ENCODE measurements at regions of chr13 and their contacts with region 1.

Region 1: DNA sequence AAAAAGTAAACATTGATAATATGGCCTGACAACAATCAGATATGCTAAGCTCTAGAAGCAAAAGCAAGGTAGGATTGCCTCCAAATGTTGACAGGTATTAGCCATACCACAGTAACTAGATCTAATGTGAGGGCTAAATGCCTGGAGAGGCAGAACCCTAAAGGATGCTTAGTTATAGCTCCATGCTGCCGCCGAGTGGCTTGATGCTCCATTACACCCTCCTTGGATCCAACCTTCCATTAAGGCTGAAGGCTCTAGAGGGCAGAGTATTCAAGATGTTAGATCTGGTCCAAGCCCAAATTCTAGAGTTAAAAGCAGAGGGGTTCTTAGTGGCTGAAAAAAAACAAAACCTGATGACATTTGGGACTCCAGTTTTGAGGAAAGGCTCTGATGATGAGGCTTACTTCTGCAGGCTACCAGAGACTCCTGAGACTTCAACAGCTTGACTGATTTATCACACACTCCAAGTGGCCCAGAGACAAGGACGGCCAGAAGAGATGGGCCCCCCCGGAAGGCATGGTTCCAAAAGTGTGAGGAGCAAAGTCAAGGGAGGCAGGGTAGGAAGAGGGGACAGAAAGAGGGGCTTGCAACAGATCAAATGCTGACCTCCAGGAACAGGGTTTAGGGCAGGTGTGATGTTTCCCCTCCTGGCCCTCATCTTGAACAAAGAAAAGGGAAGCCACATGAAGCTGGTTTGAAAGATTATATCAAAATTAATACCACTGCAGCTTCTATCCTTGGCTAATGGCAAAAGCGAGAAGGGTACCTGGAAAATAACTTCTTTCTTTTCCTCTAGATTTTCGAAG is 21.9 kb upstream of the CPB2 start:
- DNase-seq: peak; percentile 55 to 66
- ATAC-seq: peak; percentile 93 to 99
- H3K4me3 ChIP-seq: no peak overlapping the region
- H3K27ac ChIP-seq: no peak overlapping the region
- H3K4me1 ChIP-seq: no peaks in the 10 kb centered on the region
- CTCF ChIP-seq: peak; percentile 77
- EP300 ChIP-seq: no peak
- POLR2A ChIP-seq: no peak
- RAD21 ChIP-seq: peak; percentile 80 to 81

Region 2: GRCh38 chr13:45623515-45624090 is 503.2 kb before region 1 on chr13:
- CTCF ChIA-PET with region 1: interaction called, 22 read pairs
- POLR2A ChIA-PET with region 1: no interaction called
- DNase-seq: peak; percentile 25 to 27
- ATAC-seq: peak in 1 of 2 experiments; percentile 59; a peak in 3 of 6 replicates
- H3K4me3 ChIP-seq: no peak overlapping the region
- H3K27ac ChIP-seq: no peak overlapping the region
- H3K4me1 ChIP-seq: no peaks in the 10 kb centered on the region
- CTCF ChIP-seq: peak; percentile 59
- EP300 ChIP-seq: no peak
- POLR2A ChIP-seq: no peak
- RAD21 ChIP-seq: peak; percentile 50 to 62

Region 3: DNA sequence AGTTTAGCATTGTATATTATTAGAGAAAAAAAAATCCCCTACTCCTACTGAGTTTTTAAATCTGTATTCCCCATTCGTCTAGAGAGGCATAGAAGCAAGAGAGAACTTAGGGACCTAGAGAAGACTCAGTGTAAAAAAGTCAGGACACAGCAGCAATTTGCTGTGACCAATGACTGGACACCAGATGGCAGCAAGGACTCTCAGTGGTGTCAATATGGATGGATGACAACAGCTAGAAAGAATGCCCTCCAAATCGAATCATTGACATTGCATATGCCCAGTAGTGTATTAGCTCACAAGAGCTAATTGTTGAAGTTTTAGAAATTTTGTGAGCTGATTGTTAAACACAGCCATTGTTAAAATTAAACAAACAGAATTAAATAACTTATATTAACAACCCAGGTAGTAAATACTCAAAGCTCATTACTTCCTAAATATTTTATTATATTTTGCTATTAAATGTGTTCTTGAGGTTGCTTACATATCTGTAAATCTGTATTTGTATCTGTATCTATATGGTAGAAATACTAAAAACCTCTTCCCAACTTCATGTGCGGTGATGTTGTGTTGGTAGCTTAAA is 319.1 kb before region 1 on chr13:
- CTCF ChIA-PET with region 1: interaction called, 13 read pairs
- POLR2A ChIA-PET with region 1: interaction called, 3 read pairs
- DNase-seq: peak; percentile 33 to 43
- ATAC-seq: peak; percentile 39 to 72; a peak in 4 of 6 replicates
- H3K4me3 ChIP-seq: no peak overlapping the region
- H3K27ac ChIP-seq: no peak overlapping the region
- H3K4me1 ChIP-seq: no peaks in the 10 kb centered on the region
- CTCF ChIP-seq: peak; percentile 53
- EP300 ChIP-seq: no peak
- POLR2A ChIP-seq: no peak
- RAD21 ChIP-seq: peak; percentile 58 to 59; a peak in 4 of 5 replicates

Region 4: DNA sequence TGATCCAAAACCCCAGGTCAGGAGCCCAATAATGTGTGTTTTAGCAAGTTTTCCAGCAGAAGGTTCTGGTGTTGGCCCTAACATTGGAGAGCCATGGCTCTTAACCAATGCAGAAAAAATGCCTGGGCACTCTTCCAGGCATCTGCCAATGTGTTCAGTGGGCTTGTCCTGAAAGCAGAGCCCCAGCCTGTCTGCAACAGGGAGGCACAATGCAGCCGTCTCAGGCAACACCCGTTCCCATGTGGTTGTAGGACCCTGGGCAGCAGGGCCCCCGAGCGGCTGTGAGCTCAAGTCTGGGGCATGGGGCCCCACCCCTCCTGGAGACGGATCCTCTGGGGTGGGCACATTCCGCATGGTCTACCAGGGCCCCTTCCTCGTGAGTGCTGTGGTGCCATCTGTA is 217.1 kb before region 1 on chr13:
- CTCF ChIA-PET with region 1: no interaction called
- POLR2A ChIA-PET with region 1: no interaction called
- DNase-seq: no peak
- ATAC-seq: no peak
- H3K4me3 ChIP-seq: no peak overlapping the region
- H3K27ac ChIP-seq: no peak overlapping the region
- H3K4me1 ChIP-seq: no peaks in the 10 kb centered on the region
- CTCF ChIP-seq: no peak
- EP300 ChIP-seq: no peak
- POLR2A ChIP-seq: no peak
- RAD21 ChIP-seq: no peak

Region 5: GRCh38 chr13:46137627-46138317 is 11.0 kb after region 1 on chr13:
- CTCF ChIA-PET with region 1: interaction called, 31 read pairs
- POLR2A ChIA-PET with region 1: no interaction called
- DNase-seq: no peak
- ATAC-seq: no peak
- H3K4me3 ChIP-seq: no peak overlapping the region
- H3K27ac ChIP-seq: no peak overlapping the region
- H3K4me1 ChIP-seq: peaks cover 7% of the 10 kb centered on the region
- CTCF ChIP-seq: no peak
- EP300 ChIP-seq: no peak
- POLR2A ChIP-seq: no peak
- RAD21 ChIP-seq: no peak

Region 6: DNA sequence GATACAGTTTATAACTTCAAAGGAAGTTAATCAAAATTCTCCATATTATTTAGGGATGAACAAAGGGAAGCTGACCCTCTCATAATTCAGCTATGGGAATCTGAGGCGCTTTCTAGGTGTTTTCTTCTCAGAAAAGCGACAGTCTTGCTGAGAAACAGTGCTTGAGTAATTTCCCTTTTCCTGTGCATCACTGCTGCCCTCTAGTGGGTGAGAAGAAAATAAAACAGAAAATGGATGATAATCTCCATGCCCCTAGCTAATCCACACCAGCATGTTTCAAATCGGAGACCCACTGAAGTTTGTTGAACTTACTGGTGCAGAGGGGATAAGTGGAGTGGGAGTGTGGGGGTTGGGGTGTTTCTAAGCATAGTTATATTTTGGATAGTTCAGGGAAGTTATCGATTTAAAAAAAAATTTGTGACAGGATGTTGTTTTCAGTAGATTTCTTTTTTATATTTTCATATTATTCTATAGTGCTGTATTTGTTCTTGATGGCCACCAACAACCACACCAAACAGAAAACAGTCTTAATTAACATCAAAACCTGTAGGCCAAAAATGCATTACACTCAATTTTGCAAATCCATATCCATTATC is 33.8 kb after region 1 on chr13:
- CTCF ChIA-PET with region 1: interaction called, 12 read pairs
- POLR2A ChIA-PET with region 1: no interaction called
- DNase-seq: peak; percentile 47 to 55
- ATAC-seq: peak; percentile 56 to 81; a peak in 4 of 6 replicates
- H3K4me3 ChIP-seq: no peak overlapping the region
- H3K27ac ChIP-seq: no peak overlapping the region
- H3K4me1 ChIP-seq: no peaks in the 10 kb centered on the region
- CTCF ChIP-seq: peak; percentile 72
- EP300 ChIP-seq: no peak
- POLR2A ChIP-seq: no peak
- RAD21 ChIP-seq: peak; percentile 73 to 74

Region 7: DNA sequence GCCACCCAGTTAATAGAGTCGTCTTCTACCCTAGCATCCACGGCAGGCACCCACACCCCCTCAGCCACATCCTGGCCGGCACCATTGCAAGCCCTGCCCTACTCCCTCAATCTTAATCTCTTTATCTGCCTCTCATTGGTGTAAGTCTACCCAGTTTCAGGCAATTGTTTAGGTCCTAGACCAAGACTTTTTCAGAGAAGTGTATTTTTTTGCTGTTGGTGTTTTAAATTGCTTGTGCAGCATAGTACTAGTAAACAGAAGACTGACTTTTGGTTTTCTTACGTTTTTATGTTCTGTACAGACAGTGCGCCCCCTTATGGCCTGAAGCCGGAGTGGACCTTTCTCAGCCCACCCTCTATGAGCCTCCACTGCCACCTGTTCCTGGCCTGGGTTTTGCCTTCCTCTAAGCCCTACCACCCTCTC is 57.5 kb after region 1 on chr13:
- CTCF ChIA-PET with region 1: no interaction called
- POLR2A ChIA-PET with region 1: no interaction called
- DNase-seq: peak; percentile 10 to 22
- ATAC-seq: peak; percentile 50 to 78; a peak in 4 of 6 replicates
- H3K4me3 ChIP-seq: no peak overlapping the region
- H3K27ac ChIP-seq: no peak overlapping the region
- H3K4me1 ChIP-seq: no peaks in the 10 kb centered on the region
- CTCF ChIP-seq: no peak
- EP300 ChIP-seq: no peak
- POLR2A ChIP-seq: no peak
- RAD21 ChIP-seq: peak in 1 of 2 experiments; percentile 17; a peak in 1 of 5 replicates

Region 8: DNA sequence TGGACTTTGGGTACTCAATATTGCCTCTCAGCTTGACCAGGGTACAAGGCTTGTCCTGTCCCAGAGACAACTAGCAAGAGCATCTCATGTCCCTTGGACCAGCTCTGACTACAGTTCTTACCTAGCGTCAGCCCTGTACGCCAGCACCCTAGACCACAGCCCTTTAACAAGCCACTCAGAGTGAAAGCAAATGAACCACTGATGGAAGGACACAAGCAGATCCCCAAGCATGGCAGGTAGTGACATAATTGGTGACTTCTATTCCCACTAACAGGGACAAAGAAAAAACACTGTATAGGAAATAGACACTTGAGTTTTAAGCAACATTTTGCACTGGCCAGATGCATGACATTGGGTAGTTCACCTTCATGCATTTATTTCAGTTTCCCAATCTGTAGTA is 417.5 kb after region 1 on chr13:
- CTCF ChIA-PET with region 1: no interaction called
- POLR2A ChIA-PET with region 1: no interaction called
- DNase-seq: no peak
- ATAC-seq: no peak
- H3K4me3 ChIP-seq: no peak overlapping the region
- H3K27ac ChIP-seq: no peak overlapping the region
- H3K4me1 ChIP-seq: peaks cover 30% of the 10 kb centered on the region
- CTCF ChIP-seq: no peak
- EP300 ChIP-seq: no peak
- POLR2A ChIP-seq: no peak
- RAD21 ChIP-seq: no peak